HCT116 (cell line): ENCODE measurements at regions of chr1 and their contacts with region 1.

Region 1: DNA sequence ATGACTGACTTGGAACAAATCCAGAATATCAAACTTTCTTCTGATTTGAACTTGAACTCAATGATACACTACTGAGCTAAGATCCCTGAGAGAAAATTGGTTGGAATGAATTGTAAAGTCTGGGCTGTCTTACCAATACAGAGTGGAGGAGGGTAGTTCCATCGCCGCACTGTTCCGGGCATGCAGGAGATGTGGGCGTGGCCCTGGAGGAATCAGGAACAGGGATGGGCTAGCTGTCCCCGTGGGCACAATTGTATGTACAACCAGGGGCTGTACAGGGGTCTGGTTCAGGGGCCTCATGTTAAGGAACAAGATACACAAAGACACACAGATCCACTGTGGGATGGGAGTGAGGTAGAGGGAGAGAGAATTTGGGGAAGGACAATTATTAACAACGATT is 144.3 kb downstream of the ZSCAN20 start:
- DNase-seq: no peak
- ATAC-seq: no peak
- H3K4me3 ChIP-seq: no peak overlapping the region
- H3K27ac ChIP-seq: no peak overlapping the region
- H3K4me1 ChIP-seq: peaks cover 0 to 5% of the 10 kb centered on the region in 2 experiments; a peak in 1 of 4 replicates
- H3K27me3 ChIP-seq: peaks cover 4% of the 10 kb centered on the region; the same call in 1 of the 2 replicates
- CTCF ChIP-seq: no peak
- POLR2A ChIP-seq: no peak
- RAD21 ChIP-seq: no peak

Region 2: GRCh38 chr1:33367485-33368405 is 249.0 kb before region 1 on chr1:
- CTCF ChIA-PET with region 1: no interaction called
- POLR2A ChIA-PET with region 1: no interaction called
- RAD21 ChIA-PET with region 1: no interaction called
- intact Hi-C with region 1: loop called (anchors 2 kb)
- DNase-seq: peak; percentile 38
- ATAC-seq: peak; percentile 91
- H3K4me3 ChIP-seq: no peak overlapping the region
- H3K27ac ChIP-seq: no peak overlapping the region; the same call in 1 of the 2 replicates
- H3K4me1 ChIP-seq: 0 out of 4 replicates have a peak, but pooled peaks cover 0 to 3% of the 10 kb centered on the region in 2 experiments
- H3K27me3 ChIP-seq: no peaks in the 10 kb centered on the region
- CTCF ChIP-seq: peak; percentile 87 to 93 (median 93)
- POLR2A ChIP-seq: no peak
- RAD21 ChIP-seq: peak; percentile 92

Region 3: GRCh38 chr1:33633019-33633801 is 16.4 kb after region 1 on chr1:
- CTCF ChIA-PET with region 1: interaction called, 18 read pairs
- POLR2A ChIA-PET with region 1: no interaction called
- RAD21 ChIA-PET with region 1: no interaction called
- intact Hi-C with region 1: no loop called
- DNase-seq: peak; percentile 82
- ATAC-seq: peak; percentile 85
- H3K4me3 ChIP-seq: no peak overlapping the region
- H3K27ac ChIP-seq: no peak overlapping the region
- H3K4me1 ChIP-seq: peaks cover 0 to 12% of the 10 kb centered on the region in 2 experiments; a peak in 2 of 4 replicates
- H3K27me3 ChIP-seq: 0 out of 2 replicates have a peak, but pooled peaks cover 5% of the 10 kb centered on the region
- CTCF ChIP-seq: peak; percentile 99 to 100 (median 100)
- POLR2A ChIP-seq: no peak
- RAD21 ChIP-seq: peak; percentile 67